Activated naive CD4-positive, alpha-beta T cell treated with anti-CD3 and anti-CD28 coated beads for 36 hours (primary cell): ENCODE measurements at regions of chr12 and their contacts with region 1.

Region 1: DNA sequence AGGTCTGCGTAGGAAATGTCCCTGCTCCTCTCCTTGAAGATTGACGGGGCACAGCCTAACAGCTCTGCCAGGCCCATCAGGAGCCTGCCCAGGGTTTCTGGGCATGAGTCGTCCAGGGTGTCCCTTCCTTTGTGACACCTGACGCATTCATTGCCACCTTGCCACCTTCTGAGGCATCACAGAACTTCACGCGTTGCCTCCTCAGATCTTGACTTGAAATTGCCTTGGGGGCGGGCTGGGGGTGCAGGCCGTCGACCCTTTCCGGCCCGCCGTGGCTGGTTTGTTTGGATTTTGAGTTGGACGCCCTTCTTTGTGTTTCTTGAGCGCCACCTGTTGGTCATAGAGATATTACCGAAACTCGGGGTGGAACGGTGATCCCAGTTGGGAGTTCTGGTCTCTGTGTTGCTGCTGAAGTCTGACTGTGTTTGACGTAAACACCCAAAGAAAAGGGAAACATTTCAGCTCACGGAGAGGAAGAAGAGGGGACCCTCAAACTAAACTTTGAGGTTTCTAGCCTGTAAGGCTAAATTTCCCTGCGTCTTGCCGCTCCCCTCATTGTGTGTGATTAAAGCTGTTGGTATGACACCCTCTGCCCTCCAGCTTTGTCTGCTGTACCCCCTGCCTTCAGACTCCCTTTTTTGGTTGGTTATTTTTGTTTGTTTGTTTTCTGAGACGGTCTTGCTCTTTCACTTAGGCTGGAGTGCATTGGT is 44.6 kb downstream of the MLXIP start:
- DNase-seq: peak; percentile 82
- H3K4me3 Mint-ChIP-seq: no peak overlapping the region
- H3K27ac Mint-ChIP-seq: peak overlapping the region; percentile 47
- H3K4me1 Mint-ChIP-seq: peaks cover 40% of the 10 kb centered on the region
- H3K27me3 Mint-ChIP-seq: no peaks in the 10 kb centered on the region

Region 2: DNA sequence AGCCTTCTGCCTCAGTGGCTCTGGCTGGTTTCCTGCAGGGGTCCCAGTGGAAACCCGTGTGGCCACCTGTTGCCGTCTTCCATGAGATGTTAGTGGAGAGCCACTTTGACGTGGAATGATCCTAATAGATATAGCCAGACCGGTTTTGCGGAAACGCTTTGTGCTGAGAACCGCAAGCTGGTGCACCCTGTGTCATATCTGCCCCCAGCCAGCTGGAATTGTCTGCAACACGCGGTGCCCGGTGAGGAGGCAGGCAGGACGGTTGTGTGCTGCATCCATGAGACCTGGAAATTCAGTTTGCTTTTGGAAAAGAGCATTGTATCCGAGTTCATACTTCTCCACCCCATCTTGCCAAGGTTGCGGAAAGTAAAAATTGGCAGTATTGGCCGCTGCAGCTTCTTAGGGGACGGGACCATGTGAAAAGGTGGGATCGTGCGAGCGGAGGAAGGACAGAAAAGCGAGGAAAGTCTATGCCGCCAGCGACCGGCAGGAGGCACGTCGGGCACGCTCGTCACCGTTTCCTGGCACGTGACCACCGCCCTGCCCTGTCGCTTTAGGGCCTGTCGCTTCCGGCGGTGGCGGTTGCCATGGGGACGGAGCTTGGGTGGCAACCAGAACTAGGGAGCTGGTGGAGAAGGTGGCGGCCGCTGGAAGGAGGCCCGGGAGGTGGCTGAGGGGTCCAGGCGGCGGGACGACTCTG is 205.1 kb before region 1 on chr12 and contains the start of gene CFAP251:
- CTCF ChIA-PET with region 1: interaction called, 4 read pairs
- intact Hi-C with region 1: loop called (anchors 5 kb)
- DNase-seq: peak; percentile 98
- H3K4me3 Mint-ChIP-seq: peak within 1 kb of the TSS; percentile 69
- H3K27ac Mint-ChIP-seq: peak within 1 kb of the TSS; percentile 78
- H3K4me1 Mint-ChIP-seq: peaks cover 16% of the 10 kb centered on the region
- H3K27me3 Mint-ChIP-seq: no peaks in the 10 kb centered on the region
- total RNA-seq, gene CFAP251: 0.20 to 0.62 TPM

Region 3: DNA sequence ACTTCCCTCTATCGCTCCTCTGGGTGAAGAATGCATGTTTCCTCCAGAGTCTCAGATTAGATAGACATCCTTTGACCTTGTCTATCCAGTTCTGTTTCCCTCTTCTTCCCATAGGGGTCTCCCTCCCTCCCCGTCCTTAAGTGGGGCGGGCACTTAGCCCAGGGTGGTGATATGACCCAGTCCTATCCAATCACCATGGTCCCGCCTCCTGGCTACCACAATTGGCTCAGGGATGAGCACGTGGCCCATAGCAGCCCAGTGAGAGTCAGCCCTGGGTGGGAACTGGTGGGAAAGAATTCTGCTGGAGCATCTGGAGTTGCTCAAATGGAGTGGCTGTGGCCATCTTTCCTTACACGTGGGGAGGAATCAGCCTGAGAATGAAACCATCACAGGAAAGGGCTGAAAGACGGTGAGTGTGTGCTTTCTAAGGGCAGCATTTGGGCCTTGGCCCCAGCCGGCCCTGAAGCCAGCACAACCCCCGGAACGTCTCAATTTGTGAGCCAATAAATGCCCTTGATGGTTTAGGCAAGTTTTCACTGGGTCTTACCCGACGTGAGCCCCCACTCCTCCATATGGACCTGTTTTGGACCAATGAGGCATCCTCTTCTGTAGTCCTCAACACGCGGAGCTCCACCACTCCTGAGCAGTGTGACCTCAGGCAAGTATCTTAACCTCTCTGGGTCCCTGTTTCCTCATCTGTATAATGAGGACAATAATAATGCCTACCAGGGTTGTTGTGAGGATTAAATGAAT is 59.0 kb before region 1 on chr12:
- CTCF ChIA-PET with region 1: interaction called, 18 read pairs
- intact Hi-C with region 1: no loop called
- DNase-seq: peak; percentile 61
- H3K4me3 Mint-ChIP-seq: peak overlapping the region; percentile 14
- H3K27ac Mint-ChIP-seq: no peak overlapping the region
- H3K4me1 Mint-ChIP-seq: peaks cover 19% of the 10 kb centered on the region
- H3K27me3 Mint-ChIP-seq: no peaks in the 10 kb centered on the region

Region 4: GRCh38 chr12:122107261-122107660 is 15.9 kb before region 1 on chr12:
- CTCF ChIA-PET with region 1: interaction called, 18 read pairs
- intact Hi-C with region 1: no loop called
- DNase-seq: no peak
- H3K4me3 Mint-ChIP-seq: no peak overlapping the region
- H3K27ac Mint-ChIP-seq: peak overlapping the region; percentile 65
- H3K4me1 Mint-ChIP-seq: peaks cover 79% of the 10 kb centered on the region
- H3K27me3 Mint-ChIP-seq: no peaks in the 10 kb centered on the region

Region 5: GRCh38 chr12:122190842-122191668 is 67.8 kb after region 1 on chr12:
- CTCF ChIA-PET with region 1: interaction called, 5 read pairs
- intact Hi-C with region 1: loop called (anchors 2 kb)
- DNase-seq: peak; percentile 82
- H3K4me3 Mint-ChIP-seq: no peak overlapping the region
- H3K27ac Mint-ChIP-seq: no peak overlapping the region
- H3K4me1 Mint-ChIP-seq: no peaks in the 10 kb centered on the region
- H3K27me3 Mint-ChIP-seq: peaks cover 3% of the 10 kb centered on the region

Region 6: DNA sequence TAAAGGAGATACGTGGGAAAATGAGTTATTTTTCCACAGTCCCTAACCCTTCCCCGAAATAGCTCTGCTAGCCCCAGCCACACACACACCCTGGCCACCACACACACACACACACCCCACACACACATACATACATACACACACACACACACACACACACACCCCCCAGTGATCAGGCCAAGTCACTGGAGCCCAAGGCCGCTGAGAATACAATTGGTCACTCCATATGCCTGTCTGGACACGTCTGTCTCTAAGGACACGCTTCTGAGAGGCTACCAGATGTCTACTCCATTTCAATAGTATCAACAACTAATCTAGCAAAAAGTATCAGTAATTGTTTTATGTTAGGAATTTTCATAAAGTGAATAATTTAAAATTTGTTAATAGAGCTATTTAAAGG is 115.7 kb after region 1 on chr12:
- CTCF ChIA-PET with region 1: no interaction called
- intact Hi-C with region 1: no loop called
- DNase-seq: no peak
- H3K4me3 Mint-ChIP-seq: no peak overlapping the region
- H3K27ac Mint-ChIP-seq: no peak overlapping the region
- H3K4me1 Mint-ChIP-seq: peaks cover 9% of the 10 kb centered on the region
- H3K27me3 Mint-ChIP-seq: no peaks in the 10 kb centered on the region

Region 7: GRCh38 chr12:122406701-122407164 is 283.5 kb after region 1 on chr12:
- CTCF ChIA-PET with region 1: no interaction called
- intact Hi-C with region 1: no loop called
- DNase-seq: no peak
- H3K4me3 Mint-ChIP-seq: no peak overlapping the region
- H3K27ac Mint-ChIP-seq: peak overlapping the region; percentile 26
- H3K4me1 Mint-ChIP-seq: peaks cover 45% of the 10 kb centered on the region
- H3K27me3 Mint-ChIP-seq: no peaks in the 10 kb centered on the region